ENCODE measurements at regions of chr5 and their contacts with region 1.

Region 1: DNA sequence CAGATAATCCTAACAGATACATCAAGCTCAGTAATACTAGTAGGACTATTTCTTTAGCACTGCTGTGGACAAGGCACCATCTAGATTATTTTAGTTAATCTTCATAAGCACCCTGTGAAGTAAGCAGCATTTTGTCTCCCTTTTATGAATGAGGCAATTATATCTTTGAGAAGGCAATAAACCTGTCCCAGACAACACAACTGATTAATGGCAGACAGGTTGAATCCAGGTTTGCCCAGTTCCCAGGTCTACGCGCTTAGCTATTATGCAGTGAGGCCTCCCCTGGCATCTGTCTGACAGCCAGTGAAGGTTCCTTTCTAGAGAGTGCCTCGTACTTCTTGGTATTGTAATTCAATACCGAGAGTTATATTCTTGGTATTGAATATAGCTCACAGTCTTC is 9.7 kb upstream of the LVRN start:
- DNase-seq: no peak

Region 2: DNA sequence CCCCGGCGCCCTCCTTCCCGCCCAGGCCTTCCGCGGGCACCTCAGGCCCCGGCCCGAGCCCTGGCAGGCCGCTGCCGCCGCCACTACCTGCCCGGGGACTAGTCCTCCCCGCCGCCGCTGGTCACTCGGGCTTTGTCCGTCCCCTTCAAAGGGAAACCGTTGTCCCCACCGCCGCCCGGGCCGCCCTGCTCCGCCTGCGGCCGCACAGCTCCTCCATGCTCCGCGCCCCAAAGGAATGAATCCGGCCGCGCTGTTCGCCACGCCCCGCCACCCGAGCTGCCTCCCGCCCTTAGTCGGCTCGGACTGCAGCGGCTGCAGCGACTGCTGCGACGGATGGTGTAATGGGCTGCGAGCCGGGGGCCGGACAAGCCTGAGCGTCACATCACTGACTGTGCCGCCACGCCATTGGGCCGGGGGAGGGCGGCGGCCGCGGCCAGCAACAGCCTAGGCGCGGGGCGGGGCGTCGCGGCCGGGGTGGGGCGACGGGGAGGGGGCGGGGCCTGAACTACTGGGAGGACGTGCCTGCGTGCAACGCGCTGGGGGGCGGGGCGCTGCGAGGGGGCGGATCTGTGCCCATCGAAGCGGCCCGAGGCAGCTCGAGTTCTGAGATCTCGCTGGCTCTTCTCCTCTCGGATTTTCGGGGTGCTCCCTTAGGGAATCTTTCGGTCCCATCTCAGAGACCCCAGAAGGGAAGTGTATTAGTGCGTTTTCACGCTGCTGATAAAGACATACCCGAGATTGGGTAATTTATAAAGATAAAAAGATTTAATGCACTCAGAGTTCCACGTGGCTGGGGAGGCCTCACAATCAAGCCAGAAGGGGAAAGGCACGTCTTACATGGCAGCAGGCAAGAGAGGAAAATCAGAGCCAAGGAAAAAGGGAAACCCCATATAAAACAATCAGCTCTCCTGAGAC is 407.9 kb before region 1 on chr5 and contains the start of gene FEM1C:
- intact Hi-C with region 1: no loop called
- DNase-seq: peak; percentile 99
- total RNA-seq, gene FEM1C: 25.6 to 32.8 TPM

Region 3: DNA sequence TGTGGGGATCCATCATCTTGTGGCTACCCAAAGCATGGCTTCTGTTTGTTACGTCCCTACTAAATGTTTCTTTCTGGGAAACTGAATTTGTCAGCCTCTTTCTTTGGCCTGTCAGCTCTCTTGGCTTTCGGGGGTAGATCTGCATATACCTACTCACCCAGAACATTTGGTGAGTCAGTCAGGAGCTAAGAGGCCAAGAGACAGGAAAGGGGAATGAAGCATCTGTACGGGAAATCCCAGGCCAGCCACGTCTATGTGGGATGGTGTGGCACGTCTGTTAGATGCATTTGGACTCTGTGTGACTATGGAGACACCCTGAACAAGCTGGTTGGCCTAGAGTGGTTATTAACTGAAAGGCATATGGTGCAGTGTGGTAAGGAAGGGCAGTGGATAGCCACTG is 194.2 kb before region 1 on chr5:
- intact Hi-C with region 1: loop called in 1 of 2 experiments (anchors 10 kb)
- DNase-seq: no peak

Region 4: DNA sequence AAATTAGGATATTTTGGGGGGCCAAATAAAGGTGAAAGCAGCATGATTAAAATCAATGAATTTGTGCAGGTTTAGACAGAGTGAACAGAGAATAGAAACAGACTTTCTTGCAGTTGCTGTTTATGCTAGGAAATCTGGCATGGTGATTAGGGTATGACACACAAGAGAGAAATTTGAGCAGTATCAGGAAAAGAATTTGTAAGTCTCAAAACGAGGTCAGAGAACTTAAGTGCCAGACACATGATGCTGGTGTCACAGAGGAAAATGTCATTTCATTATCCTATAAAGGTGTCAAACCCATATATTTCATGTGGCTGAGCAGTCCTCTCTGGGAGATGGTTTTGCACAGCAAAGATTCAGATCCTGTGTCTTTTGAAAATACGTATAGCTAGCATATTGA is 25.4 kb after region 1 on chr5:
- intact Hi-C with region 1: no loop called
- DNase-seq: no peak